A673 (cell line): ENCODE measurements at regions of chr19 and their contacts with region 1.

Region 1: DNA sequence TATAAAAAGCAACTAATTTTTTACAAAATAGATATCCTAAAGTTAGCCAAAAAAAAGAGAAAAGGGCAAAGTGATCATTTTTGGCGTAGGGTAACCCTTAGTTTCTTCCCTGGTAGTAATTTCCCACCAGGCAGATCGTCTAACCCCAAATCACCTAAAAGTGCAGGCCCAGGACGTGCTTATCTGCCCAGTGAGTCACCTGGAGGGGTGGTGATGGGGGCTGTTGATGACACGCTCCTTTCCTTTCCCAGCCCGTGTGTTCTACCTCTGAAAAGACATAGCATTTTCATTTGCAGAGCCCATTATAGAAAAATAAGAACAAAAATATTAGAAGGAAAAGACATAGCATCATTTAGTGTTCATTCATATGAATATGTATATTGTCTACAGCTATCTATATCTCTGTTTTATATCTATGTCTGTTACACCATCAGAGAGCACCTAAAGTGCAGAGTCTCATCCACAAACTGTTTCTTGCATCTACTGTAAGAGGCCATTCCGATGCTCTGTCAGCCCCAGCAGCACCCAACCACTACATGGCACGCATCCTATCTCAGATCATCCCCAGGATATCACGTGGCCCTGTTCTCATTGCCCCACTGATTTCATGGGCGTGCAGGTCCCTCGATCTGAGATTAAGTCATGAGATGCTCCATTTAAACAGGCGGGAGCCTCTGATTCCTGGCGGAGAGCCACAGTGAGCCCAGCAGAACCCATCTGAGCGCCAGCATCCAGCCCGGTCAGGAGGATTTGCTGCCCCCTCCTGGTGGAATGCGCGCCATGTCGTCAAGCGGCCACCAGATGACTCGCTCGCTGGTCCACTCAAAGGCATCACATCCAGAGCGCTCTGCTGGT is 8.5 kb upstream of the LILRB3 start:
- DNase-seq: peak; percentile 89
- H3K4me3 ChIP-seq: no peak overlapping the region
- H3K27ac ChIP-seq: no peak overlapping the region
- H3K4me1 ChIP-seq: no peaks in the 10 kb centered on the region
- H3K27me3 ChIP-seq: peaks cover 24% of the 10 kb centered on the region
- CTCF ChIP-seq: peak; percentile 99

Region 2: GRCh38 chr19:53374291-53374690 is 857.0 kb before region 1 on chr19:
- CTCF ChIA-PET with region 1: no interaction called
- POLR2A ChIA-PET with region 1: no interaction called
- intact Hi-C with region 1: no loop called
- DNase-seq: no peak
- H3K4me3 ChIP-seq: no peak overlapping the region
- H3K27ac ChIP-seq: no peak overlapping the region
- H3K4me1 ChIP-seq: no peaks in the 10 kb centered on the region
- H3K27me3 ChIP-seq: no peaks in the 10 kb centered on the region
- CTCF ChIP-seq: no peak

Region 3: DNA sequence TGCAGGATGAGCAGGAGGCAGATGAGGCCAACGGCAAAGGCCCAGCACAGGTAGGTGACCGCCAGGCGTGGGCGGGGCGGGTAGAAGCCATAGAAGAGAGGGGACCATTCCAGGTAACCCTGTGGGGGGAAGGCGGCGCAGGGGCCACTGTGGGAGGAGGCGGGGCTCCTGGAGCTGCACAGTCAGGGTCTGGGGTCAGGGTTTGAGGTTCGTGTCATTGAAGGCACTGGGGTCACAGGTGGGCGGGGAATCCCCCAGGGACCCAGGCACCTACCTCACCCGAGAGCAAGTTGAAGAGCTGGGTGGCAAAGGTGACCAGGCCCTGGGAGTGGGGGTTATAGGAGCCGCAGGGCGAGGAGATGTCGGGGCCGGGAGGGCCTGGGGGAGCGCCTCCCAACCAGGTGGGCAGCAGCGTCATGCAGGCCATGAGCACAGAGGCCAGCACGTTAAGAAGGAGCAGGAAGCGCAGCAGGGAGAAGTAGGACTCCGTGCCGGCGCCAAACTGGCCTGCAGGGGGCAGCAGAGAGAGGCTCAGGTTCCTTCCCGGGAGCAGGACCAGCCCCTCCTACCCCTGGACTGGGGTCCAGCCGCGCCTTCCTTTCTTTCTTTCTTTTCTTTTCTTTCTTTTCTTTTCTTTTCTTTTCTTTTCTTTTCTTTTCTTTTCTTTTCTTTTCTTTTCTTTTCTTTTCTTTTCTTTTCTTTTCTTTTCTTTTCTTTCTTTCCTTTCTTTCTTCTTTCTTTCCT is 63.0 kb before region 1 on chr19:
- CTCF ChIA-PET with region 1: no interaction called
- POLR2A ChIA-PET with region 1: no interaction called
- intact Hi-C with region 1: loop called (anchors 2 kb)
- DNase-seq: peak; percentile 93
- H3K4me3 ChIP-seq: no peak overlapping the region
- H3K27ac ChIP-seq: no peak overlapping the region
- H3K4me1 ChIP-seq: peaks cover 11% of the 10 kb centered on the region
- H3K27me3 ChIP-seq: no peaks in the 10 kb centered on the region
- CTCF ChIP-seq: peak; percentile 91